GM12878 (cell line): ENCODE measurements at regions of chr17 and their contacts with region 1.

Region 1: GRCh38 chr17:16380640-16381495 is at the start of gene UBB:
- DNase-seq: peak; percentile 89
- ATAC-seq: peak; percentile 97
- H3K4me3 ChIP-seq: peak within 1 kb of the TSS; percentile 76
- H3K27ac ChIP-seq: peak within 1 kb of the TSS; percentile 100
- H3K4me1 ChIP-seq: peaks cover 16% of the 10 kb centered on the region
- H3K27me3 ChIP-seq: no peaks in the 10 kb centered on the region
- CTCF ChIP-seq: peak in 2 of 3 experiments; percentile 20 to 24; a peak in 2 of 6 replicates
- EP300 ChIP-seq: no peak; a peak in 2 of 4 replicates
- POLR2A ChIP-seq: peak; percentile 100
- RAD21 ChIP-seq: no peak
- polyA plus RNA-seq, gene UBB: 4,008 to 4,246 TPM

Region 2: GRCh38 chr17:16407911-16408588 is 27.2 kb after region 1 on chr17:
- CTCF ChIA-PET with region 1: interaction called, 53 read pairs
- POLR2A ChIA-PET with region 1: interaction called, 17 read pairs
- RAD21 ChIA-PET with region 1: interaction called, 8 read pairs
- SMC1A ChIA-PET with region 1: interaction called, 14 read pairs
- in situ Hi-C with region 1: no loop called
- intact Hi-C with region 1: no loop called
- DNase-seq: peak; percentile 96
- ATAC-seq: peak; percentile 92
- H3K4me3 ChIP-seq: peak overlapping the region; percentile 37; the same call in 1 of the 2 replicates
- H3K27ac ChIP-seq: peak overlapping the region; percentile 99
- H3K4me1 ChIP-seq: no peaks in the 10 kb centered on the region; the same call in none of the 2 replicates
- H3K27me3 ChIP-seq: no peaks in the 10 kb centered on the region
- CTCF ChIP-seq: no peak
- EP300 ChIP-seq: peak in 1 of 2 experiments; percentile 7; a peak in 1 of 4 replicates
- POLR2A ChIP-seq: no peak; the same call in 1 of the 2 replicates
- RAD21 ChIP-seq: peak; percentile 13; the same call in 1 of the 2 replicates

Region 3: DNA sequence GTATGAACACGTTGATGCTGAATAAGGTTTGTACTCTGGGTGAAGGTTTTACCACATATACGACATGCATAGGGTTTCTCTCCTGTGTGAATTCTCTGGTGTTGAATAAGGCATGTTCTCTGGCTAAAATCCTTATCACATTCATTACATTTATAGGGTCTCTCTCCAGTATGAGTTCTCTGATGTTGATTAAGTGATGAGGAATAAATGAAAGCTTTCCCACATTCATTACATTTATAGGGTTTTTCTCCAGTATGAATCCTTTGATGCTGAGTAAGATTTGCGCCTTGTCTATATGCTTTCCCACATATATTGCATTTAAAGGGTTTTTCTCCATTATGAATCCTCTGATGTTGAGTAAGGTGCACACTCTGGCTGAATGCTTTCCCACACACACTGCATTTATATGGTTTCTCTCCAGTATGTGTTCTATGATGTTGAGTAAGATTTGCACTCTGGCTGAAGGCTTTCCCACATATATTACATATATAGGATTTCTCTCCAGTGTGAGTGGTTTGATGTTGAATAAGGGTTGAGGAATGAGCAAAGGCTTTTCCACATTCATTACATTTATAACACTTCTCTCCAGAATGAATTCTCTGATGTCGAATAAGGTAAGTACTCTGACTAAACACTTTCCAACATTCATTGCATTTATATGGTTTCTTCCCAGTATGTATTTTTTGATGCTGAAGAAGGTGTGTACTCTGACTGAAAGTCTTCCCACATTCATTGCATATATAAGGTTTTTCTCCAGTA is 171.2 kb after region 1 on chr17:
- CTCF ChIA-PET with region 1: no interaction called
- POLR2A ChIA-PET with region 1: no interaction called
- RAD21 ChIA-PET with region 1: no interaction called
- SMC1A ChIA-PET with region 1: no interaction called
- in situ Hi-C with region 1: no loop called
- intact Hi-C with region 1: no loop called
- DNase-seq: no peak
- ATAC-seq: no peak
- H3K4me3 ChIP-seq: no peak overlapping the region
- H3K27ac ChIP-seq: no peak overlapping the region
- H3K4me1 ChIP-seq: no peaks in the 10 kb centered on the region
- H3K27me3 ChIP-seq: no peaks in the 10 kb centered on the region
- CTCF ChIP-seq: no peak
- EP300 ChIP-seq: no peak
- POLR2A ChIP-seq: no peak
- RAD21 ChIP-seq: no peak